Activated CD4-positive, alpha-beta T cell treated with anti-CD3 and anti-CD28 coated beads for 36 hours (primary cell): ENCODE measurements at regions of chr4 and their contacts with region 1.

Region 1: DNA sequence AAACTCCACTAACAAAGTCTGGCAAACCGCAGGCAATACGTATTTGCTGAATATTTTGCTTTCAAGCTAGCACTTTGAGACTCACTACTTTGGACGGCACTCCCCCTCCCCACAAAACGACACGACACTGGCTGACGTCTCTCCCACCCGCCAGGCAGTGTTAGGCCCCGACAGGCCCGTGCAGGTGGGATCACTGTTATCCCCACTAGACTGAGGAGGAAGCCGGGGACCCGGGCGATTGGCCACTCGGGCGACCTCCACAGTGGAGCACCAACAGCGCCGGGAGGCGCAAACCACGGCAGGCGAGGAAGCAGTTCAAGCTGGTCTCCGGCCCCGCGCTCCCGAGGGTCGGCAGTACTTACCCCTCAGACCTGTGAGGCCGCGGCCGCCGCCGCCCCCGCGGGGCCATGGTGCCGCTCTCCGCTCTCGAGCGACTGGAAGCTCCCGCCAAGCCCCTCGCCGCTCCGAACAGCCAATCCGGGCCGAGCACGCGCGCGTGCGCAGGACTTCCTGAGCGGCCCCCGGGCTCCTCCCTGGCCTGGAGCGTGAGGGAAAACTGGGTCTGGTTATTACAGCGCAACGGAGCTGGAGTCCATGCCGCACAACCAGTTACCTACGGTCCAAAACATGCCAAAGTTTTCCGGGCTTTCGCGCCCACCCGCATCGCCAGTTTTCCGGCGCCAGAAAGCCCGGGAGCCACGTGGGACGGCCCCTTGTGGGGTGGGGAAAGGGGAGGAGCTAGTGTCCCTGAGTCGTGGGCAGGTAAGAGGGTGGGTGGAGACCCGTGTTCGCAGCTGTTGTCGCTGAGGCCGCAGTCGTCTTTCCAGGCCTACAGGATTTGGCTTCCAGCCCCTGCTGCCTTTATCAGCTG is at the start of gene CENPU:
- DNase-seq: peak; percentile 98
- ATAC-seq: peak; percentile 95
- H3K4me3 Mint-ChIP-seq: peak within 1 kb of the TSS; percentile 98
- H3K27ac Mint-ChIP-seq: peak within 1 kb of the TSS; percentile 94
- H3K4me1 Mint-ChIP-seq: peaks cover 24% of the 10 kb centered on the region
- H3K27me3 Mint-ChIP-seq: no peaks in the 10 kb centered on the region
- total RNA-seq, gene CENPU: 87.7 to 88.4 TPM

Region 2: GRCh38 chr4:183444214-183445066 is 1289.4 kb before region 1 on chr4 and contains the start of gene CDKN2AIP:
- CTCF ChIA-PET with region 1: interaction called, 3 read pairs
- POLR2A ChIA-PET with region 1: no interaction called
- intact Hi-C with region 1: loop called in 1 of 2 experiments (anchors 10 kb)
- DNase-seq: peak; percentile 95
- ATAC-seq: peak; percentile 87
- H3K4me3 Mint-ChIP-seq: peak within 1 kb of the TSS; percentile 97
- H3K27ac Mint-ChIP-seq: peak within 1 kb of the TSS; percentile 97
- H3K4me1 Mint-ChIP-seq: peaks cover 42% of the 10 kb centered on the region
- H3K27me3 Mint-ChIP-seq: no peaks in the 10 kb centered on the region
- total RNA-seq, gene CDKN2AIP: 19.4 to 22.8 TPM

Region 3: DNA sequence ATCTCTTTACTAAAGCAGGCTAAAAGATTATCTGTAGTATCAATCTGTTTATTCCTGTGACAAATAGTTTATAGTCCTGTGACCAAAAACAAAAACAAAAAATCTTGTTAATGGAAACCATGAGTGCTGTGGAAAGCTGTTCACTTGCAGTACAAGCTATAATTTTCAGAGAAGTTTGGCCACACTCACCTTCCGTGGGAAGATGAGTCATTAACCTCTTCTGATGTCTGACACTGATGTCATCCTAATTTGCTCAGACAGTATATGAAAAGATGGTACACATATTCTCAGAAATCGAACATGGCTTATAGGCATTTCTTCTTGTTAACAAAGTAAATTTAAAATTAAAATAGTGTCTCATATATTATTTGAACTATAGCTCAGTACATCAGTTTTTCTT is 496.3 kb before region 1 on chr4:
- CTCF ChIA-PET with region 1: no interaction called
- POLR2A ChIA-PET with region 1: interaction called, 6 read pairs
- intact Hi-C with region 1: loop called in 1 of 2 experiments (anchors 5 kb)
- DNase-seq: peak; percentile 73
- ATAC-seq: peak; percentile 97
- H3K4me3 Mint-ChIP-seq: peak overlapping the region; percentile 9
- H3K27ac Mint-ChIP-seq: peak overlapping the region; percentile 84
- H3K4me1 Mint-ChIP-seq: peaks cover 28% of the 10 kb centered on the region
- H3K27me3 Mint-ChIP-seq: no peaks in the 10 kb centered on the region

Region 4: GRCh38 chr4:184417802-184418511 is 315.9 kb before region 1 on chr4:
- CTCF ChIA-PET with region 1: interaction called, 3 read pairs
- POLR2A ChIA-PET with region 1: interaction called, 3 read pairs
- intact Hi-C with region 1: loop called in 1 of 2 experiments (anchors 5 kb)
- DNase-seq: peak; percentile 22
- ATAC-seq: peak; percentile 73
- H3K4me3 Mint-ChIP-seq: no peak overlapping the region
- H3K27ac Mint-ChIP-seq: peak overlapping the region; percentile 64
- H3K4me1 Mint-ChIP-seq: peaks cover 90% of the 10 kb centered on the region
- H3K27me3 Mint-ChIP-seq: no peaks in the 10 kb centered on the region

Region 5: DNA sequence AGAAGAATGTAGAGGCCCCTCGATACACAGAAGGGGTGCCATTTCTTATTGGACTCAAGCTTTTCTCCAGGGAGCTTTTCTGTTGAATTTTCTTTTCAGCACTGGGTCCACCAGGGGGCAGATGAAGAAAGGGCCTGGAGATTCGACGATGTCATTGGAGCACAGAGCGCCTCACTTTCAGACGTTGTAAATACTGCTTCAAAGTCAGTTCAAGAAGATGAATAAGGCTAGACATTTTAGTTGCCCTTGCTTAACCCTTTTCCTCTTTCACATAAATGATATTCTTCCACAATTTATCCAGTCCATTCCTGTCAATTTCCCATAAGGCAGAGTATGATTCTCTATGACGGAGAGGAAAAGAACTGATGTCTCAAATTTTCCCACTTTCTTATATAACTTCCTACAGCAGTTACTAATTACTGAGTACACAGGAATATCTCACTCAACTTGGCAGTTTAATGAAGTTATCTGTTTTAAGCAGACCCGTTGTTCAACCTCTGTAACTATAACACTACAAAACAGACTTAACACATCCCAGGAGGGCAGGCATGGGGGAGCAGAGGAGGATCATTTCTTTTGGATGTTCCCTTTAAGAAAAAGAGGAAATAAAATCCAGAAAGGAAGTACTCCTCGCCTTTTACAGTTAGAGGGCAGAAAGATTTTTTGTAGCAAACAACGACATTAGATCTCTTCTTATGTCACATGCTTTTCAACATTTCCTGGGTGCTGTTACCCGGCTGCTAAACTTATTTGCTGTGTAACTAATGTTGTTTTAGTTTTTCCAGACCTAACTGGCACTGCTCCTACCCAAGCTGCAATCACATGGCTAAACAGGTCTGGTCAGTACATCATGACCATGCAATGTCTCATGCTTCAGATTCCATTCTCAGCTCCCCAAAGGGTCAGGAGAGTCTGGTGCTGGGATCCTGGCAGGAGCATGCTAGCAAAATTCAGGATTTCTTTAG is 12.2 kb after region 1 on chr4:
- CTCF ChIA-PET with region 1: interaction called, 13 read pairs
- POLR2A ChIA-PET with region 1: interaction called, 10 read pairs
- intact Hi-C with region 1: no loop called
- DNase-seq: peak; percentile 87
- ATAC-seq: peak; percentile 89
- H3K4me3 Mint-ChIP-seq: no peak overlapping the region
- H3K27ac Mint-ChIP-seq: peak overlapping the region; percentile 32
- H3K4me1 Mint-ChIP-seq: peaks cover 12% of the 10 kb centered on the region
- H3K27me3 Mint-ChIP-seq: no peaks in the 10 kb centered on the region

Region 6: DNA sequence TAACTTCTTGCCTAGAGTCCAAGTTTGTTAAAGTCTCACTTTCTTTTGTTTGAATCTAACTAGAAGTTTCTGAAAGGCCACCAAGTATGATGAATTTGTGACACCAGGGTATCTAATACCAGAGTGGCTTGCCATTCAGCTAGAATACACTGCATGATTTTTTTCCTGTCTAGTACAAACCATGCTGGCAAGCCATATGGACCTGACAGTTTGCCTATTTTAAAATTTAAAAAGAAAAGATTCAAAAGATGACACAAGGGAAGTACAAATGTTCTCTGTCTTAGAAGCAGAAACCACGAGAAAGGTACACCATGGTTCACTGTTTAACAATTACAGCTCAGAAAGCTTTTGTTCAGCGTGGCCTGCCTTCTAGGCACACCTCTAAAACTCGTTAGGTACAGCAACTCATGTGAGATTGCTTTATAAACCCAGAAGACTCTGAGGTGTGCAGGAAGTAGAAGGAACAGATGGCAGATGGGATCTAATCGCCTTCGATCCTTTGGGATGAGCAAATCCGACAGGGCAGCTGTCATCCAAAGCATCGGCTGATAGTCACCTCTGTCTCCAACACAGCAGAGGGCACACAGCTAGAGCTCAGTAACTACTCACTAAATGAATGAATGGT is 35.4 kb after region 1 on chr4:
- CTCF ChIA-PET with region 1: no interaction called
- POLR2A ChIA-PET with region 1: no interaction called
- intact Hi-C with region 1: no loop called
- DNase-seq: no peak
- ATAC-seq: peak; percentile 57
- H3K4me3 Mint-ChIP-seq: no peak overlapping the region
- H3K27ac Mint-ChIP-seq: no peak overlapping the region
- H3K4me1 Mint-ChIP-seq: peaks cover 7% of the 10 kb centered on the region
- H3K27me3 Mint-ChIP-seq: no peaks in the 10 kb centered on the region

Region 7: GRCh38 chr4:184825896-184826690 is 92.2 kb after region 1 on chr4 and contains the start of gene ACSL1:
- CTCF ChIA-PET with region 1: interaction called, 6 read pairs
- POLR2A ChIA-PET with region 1: no interaction called
- intact Hi-C with region 1: loop called (anchors 1 to 5 kb)
- DNase-seq: peak; percentile 88
- ATAC-seq: peak; percentile 82
- H3K4me3 Mint-ChIP-seq: peak within 1 kb of the TSS; percentile 87
- H3K27ac Mint-ChIP-seq: peak within 1 kb of the TSS; percentile 89
- H3K4me1 Mint-ChIP-seq: peaks cover 34% of the 10 kb centered on the region
- H3K27me3 Mint-ChIP-seq: no peaks in the 10 kb centered on the region
- total RNA-seq, gene ACSL1: 17.1 to 17.2 TPM